Heart left ventricle (tissue), 16 donors: ENCODE measurements at regions of chr9 and their contacts with region 1.

Region 1: DNA sequence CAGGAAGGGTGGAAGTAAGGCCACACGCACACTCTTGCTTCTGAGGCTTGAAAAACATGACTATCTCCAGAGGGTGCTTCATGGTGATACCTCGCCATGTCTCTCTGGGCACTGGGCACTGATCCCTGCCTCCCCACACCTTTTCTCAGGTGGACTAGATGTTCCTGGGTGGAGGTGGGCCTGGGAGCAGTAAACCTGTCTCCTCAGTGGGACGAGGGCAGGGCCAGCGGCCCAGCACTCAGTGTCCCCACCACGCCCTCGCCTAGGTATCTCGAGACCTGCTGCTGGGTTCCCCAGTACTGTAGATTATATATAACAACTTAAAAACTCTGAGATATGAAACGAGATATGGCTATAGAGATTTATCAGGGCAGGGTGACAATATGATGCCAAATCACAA is 5.6 kb downstream of the IFNA13 start:
- DNase-seq: no peak
- ATAC-seq: no peak
- H3K4me3 ChIP-seq: no peak overlapping the region
- H3K27ac ChIP-seq: no peak overlapping the region
- H3K4me1 ChIP-seq: peaks cover 0 to 9% (median 0%) of the 10 kb centered on the region in 12 donors
- H3K27me3 ChIP-seq: peaks cover 0 to 25% (median 0%) of the 10 kb centered on the region in 9 donors
- CTCF ChIP-seq: no peak
- POLR2A ChIP-seq: no peak

Region 2: GRCh38 chr9:21428235-21428634 is 65.9 kb after region 1 on chr9:
- intact Hi-C with region 1: loop called in 1 of 10 experiments (anchors 10 kb)
- DNase-seq: no peak
- ATAC-seq: no peak
- H3K4me3 ChIP-seq: no peak overlapping the region
- H3K27ac ChIP-seq: no peak overlapping the region
- H3K4me1 ChIP-seq: no peaks in the 10 kb centered on the region
- H3K27me3 ChIP-seq: peaks cover 0 to 35% (median 4%) of the 10 kb centered on the region in 9 donors
- CTCF ChIP-seq: no peak
- POLR2A ChIP-seq: no peak